WTC11 (cell line): ENCODE measurements at regions of chr11 and their contacts with region 1.

Region 1: GRCh38 chr11:33687733-33688479 is 12.7 kb downstream of the C11orf91 start:
- DNase-seq: peak; percentile 62
- ATAC-seq: peak; percentile 43
- H3K4me3 Mint-ChIP-seq: no peak overlapping the region
- H3K27ac Mint-ChIP-seq: no peak overlapping the region
- H3K4me1 Mint-ChIP-seq: peaks cover 52% of the 10 kb centered on the region
- H3K27me3 Mint-ChIP-seq: no peaks in the 10 kb centered on the region
- CTCF ChIP-seq: peak; percentile 52; the same call in 1 of the 2 replicates

Region 2: DNA sequence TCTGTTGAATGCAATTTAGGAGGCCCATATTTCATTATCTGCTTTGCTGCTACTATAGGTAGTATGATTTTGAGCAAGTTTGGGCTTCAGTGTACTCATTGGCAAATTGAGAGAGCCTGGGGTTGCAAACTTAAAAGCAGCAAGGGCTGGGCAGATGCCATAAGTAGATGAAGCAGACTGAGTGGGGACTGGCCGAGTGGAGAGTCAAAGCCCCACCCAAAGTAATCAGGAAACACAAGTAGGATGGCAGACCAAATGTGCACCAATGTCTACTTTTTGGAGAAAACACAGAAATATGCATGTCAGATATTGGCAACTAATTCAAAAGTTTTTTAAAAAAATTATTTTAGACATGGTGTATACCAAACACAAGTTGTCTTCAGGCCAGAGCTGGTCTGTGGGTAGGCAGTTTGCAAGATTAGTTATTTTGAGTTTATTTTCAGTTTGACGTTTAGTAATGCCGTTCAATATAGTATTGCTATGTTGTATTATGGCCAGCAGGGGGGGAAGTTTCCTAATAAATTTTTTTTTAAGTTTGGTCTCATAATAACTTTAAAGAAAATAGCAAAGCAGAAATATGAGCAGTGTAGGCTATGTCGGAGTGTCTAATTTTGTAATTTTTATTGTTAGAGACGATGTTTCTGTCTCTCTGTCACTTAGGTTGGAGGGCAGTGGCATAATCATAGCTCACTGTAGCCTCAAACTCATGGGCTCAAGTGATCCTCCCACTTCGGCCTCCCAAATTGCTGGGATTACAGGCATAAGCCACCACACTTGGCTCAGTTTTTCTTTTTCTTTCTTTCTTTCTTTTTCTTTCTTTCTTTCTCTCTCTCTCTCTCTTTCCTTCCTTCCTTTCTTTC is 325.6 kb before region 1 on chr11:
- CTCF ChIA-PET with region 1: interaction called, 36 read pairs
- POLR2A ChIA-PET with region 1: no interaction called
- DNase-seq: no peak
- ATAC-seq: no peak
- H3K4me3 Mint-ChIP-seq: no peak overlapping the region
- H3K27ac Mint-ChIP-seq: no peak overlapping the region
- H3K4me1 Mint-ChIP-seq: no peaks in the 10 kb centered on the region
- H3K27me3 Mint-ChIP-seq: no peaks in the 10 kb centered on the region
- CTCF ChIP-seq: peak; percentile 68

Region 3: DNA sequence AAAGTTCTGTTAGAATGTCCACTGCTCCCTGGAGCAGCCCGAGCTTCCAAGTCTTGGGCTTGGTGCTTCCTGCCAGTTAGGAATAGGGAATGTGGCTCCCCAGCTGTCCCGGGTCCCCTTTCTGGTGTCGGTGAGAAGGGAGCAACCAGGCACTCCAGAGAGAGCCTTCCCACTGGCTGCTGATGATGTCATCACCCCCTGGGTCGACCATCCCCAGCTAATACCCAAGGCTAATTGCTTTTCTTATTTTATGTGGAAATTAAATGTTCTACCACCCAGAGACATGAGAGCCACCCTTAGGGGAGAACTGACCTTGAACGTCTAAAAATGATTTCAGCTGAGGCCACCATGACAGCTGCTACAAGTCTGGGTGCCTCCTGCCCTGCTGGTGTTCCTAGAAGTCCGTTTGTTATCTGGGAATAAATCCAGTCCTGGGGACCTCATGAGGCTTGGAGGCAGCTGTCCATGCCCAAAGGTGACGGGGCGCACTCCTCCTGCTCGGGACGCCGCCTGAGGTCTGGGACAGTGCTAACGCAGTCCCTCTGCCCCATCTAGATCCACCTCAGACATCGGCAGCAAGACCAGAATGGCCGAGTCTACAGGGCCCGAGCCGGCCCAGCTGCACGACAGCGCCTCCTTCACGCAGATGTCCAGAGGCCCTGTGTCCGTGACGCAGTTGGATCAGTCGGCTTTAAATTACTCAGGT is 29.6 kb before region 1 on chr11:
- CTCF ChIA-PET with region 1: no interaction called
- POLR2A ChIA-PET with region 1: interaction called, 11 read pairs
- DNase-seq: no peak
- ATAC-seq: peak; percentile 85
- H3K4me3 Mint-ChIP-seq: no peak overlapping the region
- H3K27ac Mint-ChIP-seq: no peak overlapping the region
- H3K4me1 Mint-ChIP-seq: peaks cover 21% of the 10 kb centered on the region
- H3K27me3 Mint-ChIP-seq: no peaks in the 10 kb centered on the region
- CTCF ChIP-seq: no peak

Region 4: GRCh38 chr11:33930317-33931021 is 242.6 kb after region 1 on chr11:
- CTCF ChIA-PET with region 1: no interaction called
- POLR2A ChIA-PET with region 1: no interaction called
- DNase-seq: no peak
- ATAC-seq: peak; percentile 42; the same call in 1 of the 2 replicates
- H3K4me3 Mint-ChIP-seq: no peak overlapping the region
- H3K27ac Mint-ChIP-seq: peak overlapping the region; percentile 83; the same call in 1 of the 2 replicates
- H3K4me1 Mint-ChIP-seq: peaks cover 41% of the 10 kb centered on the region
- H3K27me3 Mint-ChIP-seq: peaks cover 9% of the 10 kb centered on the region
- CTCF ChIP-seq: no peak